WTC11 (cell line): ENCODE measurements at regions of chr16 and their contacts with region 1.

Region 1: DNA sequence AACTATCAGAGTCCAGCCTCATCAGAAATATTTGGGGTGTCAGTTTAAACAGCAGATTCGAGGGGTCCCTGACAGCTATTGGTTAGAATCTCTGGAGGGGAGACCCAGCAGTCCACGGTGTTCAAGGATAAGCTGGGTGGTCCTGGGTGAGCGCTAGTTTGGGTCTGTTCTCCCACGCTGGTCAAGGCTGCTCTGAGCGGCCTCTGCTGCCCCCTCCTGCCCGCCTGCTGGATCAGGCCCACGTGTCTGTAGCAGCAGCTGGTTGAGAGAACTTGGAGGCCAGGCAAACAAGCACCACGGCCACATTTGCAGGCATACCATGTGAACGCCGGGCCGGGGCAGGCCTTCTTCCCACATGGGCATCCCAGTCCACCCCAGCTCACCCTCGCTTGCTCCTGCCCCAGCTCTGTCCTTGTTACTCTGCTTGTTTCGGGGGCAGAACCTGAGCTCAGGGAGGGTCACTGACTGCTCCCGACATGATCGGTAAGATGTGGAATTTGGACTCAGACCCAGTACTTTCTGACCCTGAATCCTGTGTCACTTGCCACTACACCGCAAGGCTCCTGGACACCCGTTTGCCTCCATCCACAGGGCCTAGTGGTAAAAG is 7.4 kb downstream of the FOXF1 start:
- DNase-seq: peak; percentile 77
- ATAC-seq: peak; percentile 46
- H3K4me3 Mint-ChIP-seq: no peak overlapping the region
- H3K27ac Mint-ChIP-seq: no peak overlapping the region
- H3K4me1 Mint-ChIP-seq: peaks cover 25% of the 10 kb centered on the region
- H3K27me3 Mint-ChIP-seq: peaks cover 86% of the 10 kb centered on the region
- CTCF ChIP-seq: peak; percentile 51; the same call in 1 of the 2 replicates

Region 2: DNA sequence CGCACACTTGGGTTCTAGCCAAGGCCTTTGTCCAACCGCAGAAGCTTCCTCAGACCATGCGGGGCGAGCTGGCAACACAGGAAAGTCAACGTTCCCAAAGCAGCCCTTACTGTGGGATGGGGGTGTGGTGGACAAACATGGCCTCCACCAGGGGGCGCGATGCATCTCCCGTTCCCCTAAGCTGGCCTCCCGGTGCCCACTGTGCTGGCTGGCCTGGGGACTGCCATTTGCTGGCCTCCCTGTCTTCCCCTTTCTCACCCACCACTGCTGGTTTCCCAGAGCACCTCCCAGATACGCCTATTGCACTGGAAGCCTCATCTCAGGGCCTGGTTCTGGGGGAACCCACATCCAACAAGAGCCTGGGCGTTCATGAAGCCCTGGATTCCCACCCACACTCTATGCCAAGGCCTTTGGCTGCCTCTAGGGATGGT is 473.5 kb before region 1 on chr16:
- CTCF ChIA-PET with region 1: interaction called, 47 read pairs
- POLR2A ChIA-PET with region 1: no interaction called
- DNase-seq: peak; percentile 85
- ATAC-seq: peak; percentile 91
- H3K4me3 Mint-ChIP-seq: no peak overlapping the region
- H3K27ac Mint-ChIP-seq: no peak overlapping the region
- H3K4me1 Mint-ChIP-seq: peaks cover 12% of the 10 kb centered on the region
- H3K27me3 Mint-ChIP-seq: no peaks in the 10 kb centered on the region; the same call in 1 of the 2 replicates
- CTCF ChIP-seq: peak; percentile 90

Region 3: GRCh38 chr16:86072328-86073102 is 445.2 kb before region 1 on chr16:
- CTCF ChIA-PET with region 1: interaction called, 57 read pairs
- POLR2A ChIA-PET with region 1: no interaction called
- DNase-seq: peak; percentile 78
- ATAC-seq: peak; percentile 75
- H3K4me3 Mint-ChIP-seq: no peak overlapping the region
- H3K27ac Mint-ChIP-seq: no peak overlapping the region
- H3K4me1 Mint-ChIP-seq: peaks cover 10% of the 10 kb centered on the region
- H3K27me3 Mint-ChIP-seq: no peaks in the 10 kb centered on the region
- CTCF ChIP-seq: peak; percentile 58

Region 4: GRCh38 chr16:86285938-86286921 is 231.5 kb before region 1 on chr16:
- CTCF ChIA-PET with region 1: interaction called, 18 read pairs
- POLR2A ChIA-PET with region 1: interaction called, 3 read pairs
- DNase-seq: no peak
- ATAC-seq: peak; percentile 6; the same call in 1 of the 2 replicates
- H3K4me3 Mint-ChIP-seq: peak overlapping the region; percentile 78
- H3K27ac Mint-ChIP-seq: no peak overlapping the region
- H3K4me1 Mint-ChIP-seq: peaks cover 70% of the 10 kb centered on the region
- H3K27me3 Mint-ChIP-seq: peaks cover 100% of the 10 kb centered on the region
- CTCF ChIP-seq: no peak

Region 5: GRCh38 chr16:86343027-86343787 is 174.5 kb before region 1 on chr16:
- CTCF ChIA-PET with region 1: interaction called, 22 read pairs
- POLR2A ChIA-PET with region 1: no interaction called
- DNase-seq: no peak
- ATAC-seq: no peak
- H3K4me3 Mint-ChIP-seq: no peak overlapping the region
- H3K27ac Mint-ChIP-seq: no peak overlapping the region
- H3K4me1 Mint-ChIP-seq: peaks cover 55% of the 10 kb centered on the region
- H3K27me3 Mint-ChIP-seq: peaks cover 46% of the 10 kb centered on the region
- CTCF ChIP-seq: no peak

Region 6: GRCh38 chr16:86371083-86371803 is 146.5 kb before region 1 on chr16:
- CTCF ChIA-PET with region 1: no interaction called
- POLR2A ChIA-PET with region 1: no interaction called
- DNase-seq: no peak
- ATAC-seq: no peak
- H3K4me3 Mint-ChIP-seq: no peak overlapping the region
- H3K27ac Mint-ChIP-seq: no peak overlapping the region
- H3K4me1 Mint-ChIP-seq: peaks cover 35% of the 10 kb centered on the region
- H3K27me3 Mint-ChIP-seq: no peaks in the 10 kb centered on the region
- CTCF ChIP-seq: no peak

Region 7: GRCh38 chr16:86491256-86492023 is 26.3 kb before region 1 on chr16:
- CTCF ChIA-PET with region 1: interaction called, 39 read pairs
- POLR2A ChIA-PET with region 1: no interaction called
- DNase-seq: no peak
- ATAC-seq: no peak
- H3K4me3 Mint-ChIP-seq: no peak overlapping the region
- H3K27ac Mint-ChIP-seq: no peak overlapping the region
- H3K4me1 Mint-ChIP-seq: peaks cover 18% of the 10 kb centered on the region
- H3K27me3 Mint-ChIP-seq: peaks cover 87% of the 10 kb centered on the region
- CTCF ChIP-seq: no peak

Region 8: GRCh38 chr16:86498661-86499439 is 18.9 kb before region 1 on chr16:
- CTCF ChIA-PET with region 1: interaction called, 39 read pairs
- POLR2A ChIA-PET with region 1: no interaction called
- DNase-seq: no peak
- ATAC-seq: no peak
- H3K4me3 Mint-ChIP-seq: peak overlapping the region; percentile 48
- H3K27ac Mint-ChIP-seq: no peak overlapping the region
- H3K4me1 Mint-ChIP-seq: peaks cover 52% of the 10 kb centered on the region
- H3K27me3 Mint-ChIP-seq: peaks cover 100% of the 10 kb centered on the region
- CTCF ChIP-seq: no peak

Region 9: DNA sequence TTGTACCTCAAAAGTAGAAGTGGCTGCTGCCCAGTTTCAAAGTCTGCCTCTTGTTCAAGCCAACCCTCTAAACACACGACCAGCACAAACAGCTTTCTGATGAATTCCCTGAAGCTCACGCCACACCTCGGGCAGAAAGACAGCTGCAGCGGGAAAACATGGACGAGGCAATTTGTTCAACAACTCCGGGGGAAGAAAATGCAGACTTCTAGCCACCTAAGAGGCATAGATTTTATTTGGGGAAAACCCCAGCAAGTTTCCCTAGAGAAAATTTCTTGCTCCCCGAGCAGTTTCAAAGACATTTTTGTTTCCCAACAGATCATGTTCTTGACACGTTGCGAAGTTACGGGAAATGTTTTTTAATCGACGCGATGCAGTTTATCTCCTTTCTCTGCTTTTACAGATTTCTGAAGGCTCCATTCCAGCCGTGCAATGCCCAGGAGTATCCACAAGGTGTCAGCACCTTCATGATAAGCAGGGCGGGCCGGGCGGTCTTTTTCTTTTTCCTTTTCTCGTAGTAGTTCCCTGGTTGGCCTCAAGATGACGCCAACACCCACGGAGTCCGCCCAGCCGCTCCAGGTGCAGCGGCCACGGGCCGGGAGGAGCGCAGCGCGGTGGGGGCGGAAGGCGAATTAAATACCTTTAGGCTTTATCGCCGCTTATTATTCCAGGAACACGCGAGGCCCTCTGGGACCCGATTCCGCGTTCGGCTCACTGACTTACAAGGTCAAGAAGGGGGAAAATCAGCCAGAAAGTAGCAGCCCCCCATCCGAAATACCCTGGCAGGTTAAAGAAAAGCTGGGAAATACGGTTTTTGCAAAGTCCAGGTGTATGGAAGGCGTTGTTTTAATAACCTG is 46.0 kb after region 1 on chr16:
- CTCF ChIA-PET with region 1: no interaction called
- POLR2A ChIA-PET with region 1: no interaction called
- DNase-seq: peak; percentile 93
- ATAC-seq: peak; percentile 27
- H3K4me3 Mint-ChIP-seq: peak overlapping the region; percentile 62
- H3K27ac Mint-ChIP-seq: no peak overlapping the region
- H3K4me1 Mint-ChIP-seq: peaks cover 20% of the 10 kb centered on the region
- H3K27me3 Mint-ChIP-seq: peaks cover 66% of the 10 kb centered on the region
- CTCF ChIP-seq: peak; percentile 98